Cardiac septum (tissue), 1 donor: ENCODE measurements at regions of chr18 and their contacts with region 1.

Region 1: DNA sequence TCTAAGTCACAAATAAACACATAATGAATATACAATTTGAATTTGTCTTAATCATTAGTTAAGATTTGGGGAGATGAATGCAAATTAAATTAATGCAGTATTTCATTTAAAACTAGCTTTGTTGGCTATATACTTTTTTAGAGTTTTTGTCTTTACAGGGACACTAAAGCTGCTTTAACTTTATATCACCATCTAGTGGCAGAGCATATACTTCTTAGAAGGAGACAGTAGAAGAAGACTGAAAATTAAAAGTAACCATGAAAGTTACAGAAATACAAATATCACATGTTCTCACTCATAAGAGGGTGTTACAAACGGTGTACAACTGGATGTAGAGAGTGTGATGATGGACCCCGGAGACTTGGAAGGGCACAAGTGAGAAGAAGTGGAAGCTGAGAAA is 268.3 kb upstream of the NETO1 start:
- DNase-seq: no peak

Region 2: GRCh38 chr18:72768681-72769229 is 367.4 kb before region 1 on chr18:
- intact Hi-C with region 1: loop called (anchors 5 kb)
- DNase-seq: no peak

Region 3: GRCh38 chr18:72899338-72899737 is 236.8 kb before region 1 on chr18:
- intact Hi-C with region 1: no loop called
- DNase-seq: no peak